ENCODE measurements at regions of chr13 and their contacts with region 1.

Region 1: DNA sequence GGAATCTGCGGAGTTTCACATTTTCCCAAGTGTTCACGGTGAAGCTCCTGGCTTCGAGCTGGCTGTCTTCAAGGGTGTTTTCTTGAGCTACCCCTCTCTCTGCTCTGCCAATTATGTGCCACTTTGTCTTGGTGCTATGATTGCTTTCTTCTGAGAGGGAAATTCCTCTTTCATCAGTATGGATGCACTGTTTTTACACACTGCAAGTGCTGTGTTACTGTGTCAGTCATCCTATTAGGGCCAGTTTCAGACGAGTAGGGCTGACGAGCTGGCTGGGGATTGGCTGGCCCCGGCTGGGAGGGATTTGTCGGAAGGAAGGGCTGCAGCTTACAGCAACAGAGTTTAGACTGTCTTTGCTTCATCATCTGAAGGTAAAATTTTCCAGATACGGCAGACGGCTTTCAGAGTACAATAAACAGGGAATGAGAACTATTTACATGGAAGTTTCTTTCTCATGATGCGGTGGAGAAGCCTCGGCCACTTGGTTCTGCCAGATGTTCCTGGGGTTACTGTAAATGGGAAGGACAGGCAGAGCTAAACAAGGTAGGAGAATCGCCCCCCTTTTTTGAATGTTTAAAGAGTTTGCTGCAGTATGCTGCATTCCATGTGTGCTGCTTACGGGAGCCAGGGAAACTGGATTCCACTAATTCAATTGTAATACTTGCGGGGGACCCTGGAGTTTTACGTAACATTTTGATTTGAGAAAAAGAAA is at the start of gene MBNL2:
- DNase-seq: peak; percentile 53 to 93 (median 84)
- ATAC-seq: peak; percentile 97
- H3K4me3 ChIP-seq: peak within 1 kb of the TSS; percentile 80
- H3K4me3 Mint-ChIP-seq: peak within 1 kb of the TSS; percentile 88 to 97 (median 95)
- H3K27ac ChIP-seq: peak within 1 kb of the TSS; percentile 81
- H3K27ac Mint-ChIP-seq: peak within 1 kb of the TSS; percentile 89 to 98 (median 94)
- H3K4me1 ChIP-seq: peaks cover 33 to 34% of the 10 kb centered on the region in 2 donors
- H3K4me1 Mint-ChIP-seq: peaks cover 27 to 56% (median 45%) of the 10 kb centered on the region in 7 donors
- H3K27me3 ChIP-seq: no peaks in the 10 kb centered on the region
- H3K27me3 Mint-ChIP-seq: no peaks in the 10 kb centered on the region
- total RNA-seq, gene MBNL2: 13.4 to 28.6 (median 24.6) TPM

Region 2: GRCh38 chr13:97194479-97194878 is 27.7 kb before region 1 on chr13:
- CTCF ChIA-PET with region 1: no interaction called
- POLR2A ChIA-PET with region 1: interaction called, 3 read pairs
- intact Hi-C with region 1: loop called in 1 of 2 experiments (anchors 5 kb)
- DNase-seq: no peak
- ATAC-seq: no peak
- H3K4me3 ChIP-seq: no peak overlapping the region
- H3K4me3 Mint-ChIP-seq: no peak overlapping the region
- H3K27ac ChIP-seq: no peak overlapping the region
- H3K27ac Mint-ChIP-seq: no peak overlapping the region
- H3K4me1 ChIP-seq: no peaks in the 10 kb centered on the region
- H3K4me1 Mint-ChIP-seq: peaks cover 0 to 12% (median 0%) of the 10 kb centered on the region in 7 donors
- H3K27me3 ChIP-seq: no peaks in the 10 kb centered on the region
- H3K27me3 Mint-ChIP-seq: peaks cover 0 to 24% (median 3%) of the 10 kb centered on the region in 5 donors

Region 3: GRCh38 chr13:97249093-97249795 is 27.1 kb after region 1 on chr13:
- CTCF ChIA-PET with region 1: no interaction called
- POLR2A ChIA-PET with region 1: no interaction called
- intact Hi-C with region 1: loop called in 1 of 2 experiments (anchors 2 kb)
- DNase-seq: no peak
- ATAC-seq: no peak
- H3K4me3 ChIP-seq: no peak overlapping the region
- H3K4me3 Mint-ChIP-seq: no peak overlapping the region
- H3K27ac ChIP-seq: no peak overlapping the region
- H3K27ac Mint-ChIP-seq: no peak overlapping the region
- H3K4me1 ChIP-seq: peaks cover 7 to 8% of the 10 kb centered on the region in 2 donors
- H3K4me1 Mint-ChIP-seq: peaks cover 2 to 38% (median 28%) of the 10 kb centered on the region in 7 donors
- H3K27me3 ChIP-seq: no peaks in the 10 kb centered on the region
- H3K27me3 Mint-ChIP-seq: no peaks in the 10 kb centered on the region

Region 4: GRCh38 chr13:97344265-97345175 is 122.4 kb after region 1 on chr13:
- CTCF ChIA-PET with region 1: interaction called, 3 read pairs
- POLR2A ChIA-PET with region 1: no interaction called
- intact Hi-C with region 1: loop called (anchors 5 kb)
- DNase-seq: peak in 6 of 9 donors; percentile 22 to 53 (median 39)
- ATAC-seq: peak; percentile 54
- H3K4me3 ChIP-seq: no peak overlapping the region
- H3K4me3 Mint-ChIP-seq: no peak overlapping the region
- H3K27ac ChIP-seq: no peak overlapping the region
- H3K27ac Mint-ChIP-seq: no peak overlapping the region
- H3K4me1 ChIP-seq: no peaks in the 10 kb centered on the region
- H3K4me1 Mint-ChIP-seq: peaks cover 0 to 4% (median 0%) of the 10 kb centered on the region in 7 donors
- H3K27me3 ChIP-seq: no peaks in the 10 kb centered on the region
- H3K27me3 Mint-ChIP-seq: no peaks in the 10 kb centered on the region

Region 5: GRCh38 chr13:97432917-97433726 is 211.0 kb after region 1 on chr13:
- CTCF ChIA-PET with region 1: no interaction called
- POLR2A ChIA-PET with region 1: interaction called, 32 read pairs
- intact Hi-C with region 1: loop called (anchors 1 kb)
- DNase-seq: peak; percentile 97 to 99 (median 99)
- ATAC-seq: peak; percentile 85
- H3K4me3 ChIP-seq: peak overlapping the region; percentile 93
- H3K4me3 Mint-ChIP-seq: peak overlapping the region; percentile 90 to 99 (median 96)
- H3K27ac ChIP-seq: peak overlapping the region; percentile 100
- H3K27ac Mint-ChIP-seq: peak overlapping the region; percentile 98 to 100 (median 100)
- H3K4me1 ChIP-seq: peaks cover 0 to 8% of the 10 kb centered on the region in 2 donors
- H3K4me1 Mint-ChIP-seq: peaks cover 13 to 36% (median 30%) of the 10 kb centered on the region in 7 donors
- H3K27me3 ChIP-seq: no peaks in the 10 kb centered on the region
- H3K27me3 Mint-ChIP-seq: peaks cover 0 to 11% (median 7%) of the 10 kb centered on the region in 5 donors

Region 6: DNA sequence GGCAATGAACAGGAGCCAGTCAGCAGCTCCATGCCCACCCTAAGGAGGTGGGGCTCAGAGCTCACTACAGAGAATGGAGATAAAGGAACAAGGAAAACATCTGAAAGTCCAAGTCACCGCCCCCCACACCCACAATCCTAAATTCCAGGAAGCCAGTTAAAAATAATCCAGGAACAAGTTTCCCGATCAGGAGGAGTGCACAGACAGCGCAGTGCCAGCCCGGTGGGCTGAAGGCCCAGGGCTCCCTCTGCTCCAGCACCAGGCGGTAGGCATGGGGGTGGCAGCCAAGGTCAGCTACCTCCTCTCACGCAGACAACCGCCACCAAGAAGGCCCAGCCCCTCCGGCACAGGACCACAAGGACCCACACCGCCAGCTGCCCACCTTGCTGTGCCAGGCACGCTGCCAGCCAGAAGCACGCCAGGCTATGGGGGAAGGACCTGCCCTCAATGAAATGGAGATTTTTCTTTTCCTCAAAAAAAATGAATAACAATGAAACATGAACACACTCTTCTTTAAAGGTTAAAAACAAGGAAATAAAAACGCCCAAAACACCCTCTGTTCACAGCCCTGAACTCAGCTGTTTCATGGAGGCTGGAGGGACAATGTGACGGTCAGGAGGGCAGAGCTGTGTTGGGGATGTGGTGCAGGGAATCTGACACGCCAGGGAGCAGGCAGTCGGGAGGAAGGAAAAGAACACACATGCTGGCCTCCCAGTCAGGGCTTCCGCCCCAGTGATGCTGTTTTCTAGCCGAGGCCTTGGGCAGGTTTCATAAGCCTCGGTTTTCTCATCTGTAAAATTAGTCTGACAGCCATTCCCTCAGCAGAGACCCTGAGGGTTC is 1343.8 kb after region 1 on chr13:
- CTCF ChIA-PET with region 1: no interaction called
- POLR2A ChIA-PET with region 1: no interaction called
- intact Hi-C with region 1: loop called (anchors 5 to 10 kb)
- DNase-seq: no peak
- ATAC-seq: no peak
- H3K4me3 ChIP-seq: no peak overlapping the region
- H3K4me3 Mint-ChIP-seq: peak overlapping the region; percentile 77 to 99 (median 84)
- H3K27ac ChIP-seq: peak overlapping the region; percentile 69
- H3K27ac Mint-ChIP-seq: peak overlapping the region; percentile 84 to 97 (median 96)
- H3K4me1 ChIP-seq: peaks cover 50 to 87% of the 10 kb centered on the region in 2 donors
- H3K4me1 Mint-ChIP-seq: peaks cover 67 to 99% (median 93%) of the 10 kb centered on the region in 7 donors
- H3K27me3 ChIP-seq: no peaks in the 10 kb centered on the region
- H3K27me3 Mint-ChIP-seq: no peaks in the 10 kb centered on the region

Measured in naive thymus-derived CD4-positive, alpha-beta T cell (primary cell).